HepG2 (cell line): ENCODE measurements at regions of chr6 and their contacts with region 1.

Region 1: DNA sequence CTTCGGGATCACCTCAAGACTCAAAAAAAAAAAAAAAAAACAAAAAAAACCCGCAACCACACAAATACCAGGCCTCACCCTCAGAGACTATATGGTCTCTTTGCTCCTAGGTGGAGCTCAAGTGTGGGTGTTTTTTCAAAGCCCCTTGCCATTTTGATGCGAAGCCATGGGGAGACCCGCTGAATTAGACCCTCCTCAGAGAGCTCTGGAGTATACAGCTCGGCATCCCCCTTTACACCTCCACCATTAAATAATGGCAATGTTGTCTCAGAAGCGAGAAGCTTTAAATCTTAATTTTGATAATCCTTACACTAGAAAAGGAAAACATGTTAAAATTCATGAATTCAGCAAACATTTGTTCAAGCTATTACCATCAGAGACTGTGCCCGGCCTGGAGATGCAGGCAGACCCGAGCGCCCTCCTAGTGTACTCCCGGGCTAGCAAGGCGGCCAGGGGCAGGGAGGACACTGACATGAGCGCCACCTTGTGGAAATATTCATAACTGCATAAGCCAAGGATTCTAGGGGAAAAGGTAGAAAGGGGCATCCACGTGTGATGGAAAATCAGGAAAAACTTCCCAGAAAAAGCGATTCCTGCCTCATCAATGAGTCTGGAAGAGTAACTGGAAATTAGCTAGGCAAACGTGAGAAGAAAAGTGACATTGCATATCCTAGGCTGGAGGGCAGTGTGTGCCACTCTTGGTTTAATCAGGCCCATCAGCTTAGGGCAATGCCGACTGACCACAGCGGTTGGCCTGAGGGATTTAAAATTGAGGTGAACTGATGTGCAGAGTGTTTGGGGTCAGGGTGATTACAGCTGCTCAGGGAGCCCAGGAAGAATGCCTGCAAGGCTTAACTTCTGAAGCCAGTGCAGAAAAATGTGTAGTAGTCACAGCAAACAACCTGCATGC is 72.5 kb downstream of the B3GAT2 start:
- DNase-seq: peak; percentile 59
- ATAC-seq: peak; percentile 97
- H3K4me3 ChIP-seq: peak overlapping the region in 1 of 3 experiments; percentile 20; a peak in 1 of 6 replicates
- H3K27ac ChIP-seq: no peak overlapping the region
- H3K4me1 ChIP-seq: peaks cover 16% of the 10 kb centered on the region; the same call in 1 of the 2 replicates
- H3K27me3 ChIP-seq: peaks cover 0 to 20% of the 10 kb centered on the region in 2 experiments; a peak in 3 of 5 replicates
- CTCF ChIP-seq: peak; percentile 92
- EP300 ChIP-seq: no peak
- POLR2A ChIP-seq: no peak
- RAD21 ChIP-seq: peak; percentile 93

Region 2: GRCh38 chr6:70299456-70299855 is 584.9 kb before region 1 on chr6:
- CTCF ChIA-PET with region 1: no interaction called
- POLR2A ChIA-PET with region 1: no interaction called
- in situ Hi-C with region 1: no loop called
- intact Hi-C with region 1: no loop called
- DNase-seq: no peak
- ATAC-seq: no peak
- H3K4me3 ChIP-seq: no peak overlapping the region
- H3K27ac ChIP-seq: no peak overlapping the region
- H3K4me1 ChIP-seq: no peaks in the 10 kb centered on the region
- H3K27me3 ChIP-seq: peaks cover 0 to 2% of the 10 kb centered on the region in 2 experiments; a peak in 1 of 5 replicates
- CTCF ChIP-seq: no peak
- EP300 ChIP-seq: no peak
- POLR2A ChIP-seq: no peak
- RAD21 ChIP-seq: no peak

Region 3: DNA sequence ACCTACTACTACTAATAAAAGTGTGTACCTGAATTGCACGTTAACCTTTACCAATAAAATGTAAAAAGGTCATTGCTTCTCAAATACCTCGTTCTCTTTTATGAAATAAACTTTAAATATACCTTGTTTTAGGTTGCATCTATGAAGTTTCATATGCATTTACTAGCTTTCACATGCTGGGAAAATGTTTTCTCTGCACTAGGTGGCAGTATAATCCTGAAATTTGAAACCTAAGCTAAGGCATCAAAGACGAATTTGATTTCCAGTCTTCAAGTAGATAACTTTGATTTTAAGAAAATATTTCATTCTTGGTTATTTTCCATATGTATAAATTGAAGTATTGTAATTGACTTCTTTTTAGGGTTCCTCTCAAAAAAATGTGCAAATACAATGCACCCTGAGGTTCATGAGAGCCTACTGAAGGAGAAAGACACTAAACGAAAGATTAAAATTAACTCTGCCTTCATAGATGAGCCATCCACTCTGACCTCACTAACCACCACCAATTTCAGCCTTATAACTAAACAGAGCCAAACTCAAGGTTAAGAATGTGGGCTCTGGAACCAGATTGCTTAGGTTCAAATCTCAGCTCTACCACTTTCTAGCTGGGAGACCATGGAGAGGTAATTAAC is 574.1 kb before region 1 on chr6:
- CTCF ChIA-PET with region 1: no interaction called
- POLR2A ChIA-PET with region 1: no interaction called
- in situ Hi-C with region 1: no loop called
- intact Hi-C with region 1: loop called (anchors 5 kb)
- DNase-seq: peak; percentile 33
- ATAC-seq: no peak
- H3K4me3 ChIP-seq: no peak overlapping the region
- H3K27ac ChIP-seq: no peak overlapping the region
- H3K4me1 ChIP-seq: no peaks in the 10 kb centered on the region
- H3K27me3 ChIP-seq: no peaks in the 10 kb centered on the region
- CTCF ChIP-seq: peak; percentile 68
- EP300 ChIP-seq: no peak
- POLR2A ChIP-seq: no peak
- RAD21 ChIP-seq: 0 out of 2 replicates have a peak, but pooled peaks have one; percentile 35

Region 4: DNA sequence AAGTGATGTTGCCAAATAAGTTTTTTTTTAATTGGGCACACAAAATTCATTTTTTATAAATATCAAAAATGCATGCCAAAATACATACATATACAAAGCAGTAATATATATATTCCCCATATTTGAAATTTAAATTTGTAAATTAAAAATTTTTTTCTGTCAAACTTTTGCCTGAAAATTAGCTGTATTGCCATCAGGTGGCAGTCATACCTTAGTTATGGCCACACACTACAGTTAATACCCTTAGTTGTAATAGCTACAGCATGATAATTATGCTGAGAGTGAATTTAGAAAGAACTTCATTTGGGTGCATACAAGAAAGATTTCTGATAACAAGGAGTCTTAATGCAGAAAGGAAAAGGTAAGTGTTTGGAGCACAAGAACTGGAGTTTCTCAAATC is 363.8 kb before region 1 on chr6:
- CTCF ChIA-PET with region 1: no interaction called
- POLR2A ChIA-PET with region 1: no interaction called
- in situ Hi-C with region 1: no loop called
- intact Hi-C with region 1: loop called (anchors 1 kb)
- DNase-seq: peak; percentile 3
- ATAC-seq: no peak
- H3K4me3 ChIP-seq: no peak overlapping the region
- H3K27ac ChIP-seq: no peak overlapping the region
- H3K4me1 ChIP-seq: peaks cover 11% of the 10 kb centered on the region; the same call in 1 of the 2 replicates
- H3K27me3 ChIP-seq: no peaks in the 10 kb centered on the region
- CTCF ChIP-seq: peak; percentile 36
- EP300 ChIP-seq: no peak
- POLR2A ChIP-seq: no peak
- RAD21 ChIP-seq: no peak; the same call in 1 of the 2 replicates

Region 5: DNA sequence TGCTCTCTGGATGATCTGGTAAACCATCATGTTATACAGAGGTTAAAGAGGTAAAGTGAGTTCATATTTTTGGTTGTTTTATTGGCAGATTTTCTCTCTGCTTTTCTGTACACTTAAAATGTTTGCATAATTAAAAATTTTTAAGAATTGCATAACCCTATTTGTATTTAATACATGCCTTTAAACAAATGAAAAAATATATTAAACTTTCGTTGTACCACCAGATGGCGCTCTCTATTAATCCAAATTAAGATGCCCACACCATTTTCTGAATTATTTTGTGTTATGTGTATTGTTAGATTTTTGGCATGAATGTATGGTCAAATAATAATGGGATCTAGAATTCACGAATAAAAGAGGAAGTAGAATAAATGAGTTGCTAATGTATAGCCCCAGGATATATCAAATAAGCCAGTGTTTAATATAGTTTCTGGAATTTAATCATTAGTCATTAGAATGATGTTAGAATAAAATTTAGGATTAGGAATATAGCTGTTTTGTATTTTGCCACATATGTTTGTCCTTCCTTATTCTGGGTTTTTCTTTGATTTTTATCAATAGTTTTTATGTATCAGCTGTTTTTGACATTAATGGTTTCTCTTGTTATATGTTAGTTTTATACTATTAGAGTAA is 177.7 kb before region 1 on chr6:
- CTCF ChIA-PET with region 1: interaction called, 47 read pairs
- POLR2A ChIA-PET with region 1: interaction called, 3 read pairs
- in situ Hi-C with region 1: loop called (anchors 5 kb)
- intact Hi-C with region 1: loop called (anchors 1 kb)
- DNase-seq: peak; percentile 20
- ATAC-seq: no peak
- H3K4me3 ChIP-seq: no peak overlapping the region
- H3K27ac ChIP-seq: no peak overlapping the region
- H3K4me1 ChIP-seq: no peaks in the 10 kb centered on the region
- H3K27me3 ChIP-seq: no peaks in the 10 kb centered on the region
- CTCF ChIP-seq: peak; percentile 53
- EP300 ChIP-seq: no peak
- POLR2A ChIP-seq: no peak
- RAD21 ChIP-seq: peak; percentile 45; the same call in 1 of the 2 replicates